Activated CD4-positive, alpha-beta T cell treated with anti-CD3 and anti-CD28 coated beads, Interleukin-2, amount 10 ng/mL, durations not matched to agents 24 days and 14 days (primary cell): ENCODE measurements at regions of chr5 and their contacts with region 1.

Region 1: DNA sequence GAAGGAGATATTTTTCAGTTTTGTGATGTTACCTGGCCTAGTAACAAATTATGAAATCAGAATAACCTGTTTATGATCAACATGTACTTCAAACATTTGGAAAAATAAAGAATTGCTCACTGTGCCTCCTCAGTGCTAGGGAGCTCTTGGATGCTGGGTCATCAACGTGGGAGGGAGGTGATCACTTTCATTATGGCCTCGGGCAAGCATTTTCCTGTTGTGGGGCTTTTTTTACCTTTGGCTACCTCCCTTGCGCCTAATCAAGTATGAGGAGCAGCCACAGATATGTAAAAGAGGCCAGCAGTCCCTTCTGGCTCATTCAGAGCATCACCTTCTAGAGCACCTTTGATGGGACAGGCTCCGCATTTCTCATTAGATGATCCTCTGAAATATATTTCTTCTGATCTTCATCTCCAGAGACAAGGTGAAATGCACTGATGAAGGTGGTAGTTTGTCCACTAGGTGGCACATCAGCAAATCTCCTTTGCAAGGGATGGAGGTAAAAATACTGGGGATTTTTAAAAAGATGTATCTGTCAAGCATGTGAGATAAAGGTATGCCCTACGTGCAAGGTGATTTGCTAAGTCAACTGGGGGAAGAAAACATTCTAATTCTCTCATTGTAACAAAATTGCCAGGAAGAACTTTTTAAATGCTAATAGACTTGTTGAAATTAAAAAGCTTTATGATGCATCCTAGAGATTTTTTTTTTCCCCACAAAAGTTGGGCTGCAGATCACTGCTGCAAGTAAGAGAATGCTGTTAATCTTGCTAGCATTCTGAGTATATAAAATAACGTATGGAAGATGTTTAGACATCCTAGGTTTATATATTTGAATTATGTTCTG is 218.2 kb downstream of the MAST4 start:
- DNase-seq: peak; percentile 88
- H3K4me3 Mint-ChIP-seq: no peak overlapping the region
- H3K27ac Mint-ChIP-seq: no peak overlapping the region
- H3K4me1 Mint-ChIP-seq: peaks cover 33% of the 10 kb centered on the region
- H3K27me3 Mint-ChIP-seq: peaks cover 3% of the 10 kb centered on the region

Region 2: DNA sequence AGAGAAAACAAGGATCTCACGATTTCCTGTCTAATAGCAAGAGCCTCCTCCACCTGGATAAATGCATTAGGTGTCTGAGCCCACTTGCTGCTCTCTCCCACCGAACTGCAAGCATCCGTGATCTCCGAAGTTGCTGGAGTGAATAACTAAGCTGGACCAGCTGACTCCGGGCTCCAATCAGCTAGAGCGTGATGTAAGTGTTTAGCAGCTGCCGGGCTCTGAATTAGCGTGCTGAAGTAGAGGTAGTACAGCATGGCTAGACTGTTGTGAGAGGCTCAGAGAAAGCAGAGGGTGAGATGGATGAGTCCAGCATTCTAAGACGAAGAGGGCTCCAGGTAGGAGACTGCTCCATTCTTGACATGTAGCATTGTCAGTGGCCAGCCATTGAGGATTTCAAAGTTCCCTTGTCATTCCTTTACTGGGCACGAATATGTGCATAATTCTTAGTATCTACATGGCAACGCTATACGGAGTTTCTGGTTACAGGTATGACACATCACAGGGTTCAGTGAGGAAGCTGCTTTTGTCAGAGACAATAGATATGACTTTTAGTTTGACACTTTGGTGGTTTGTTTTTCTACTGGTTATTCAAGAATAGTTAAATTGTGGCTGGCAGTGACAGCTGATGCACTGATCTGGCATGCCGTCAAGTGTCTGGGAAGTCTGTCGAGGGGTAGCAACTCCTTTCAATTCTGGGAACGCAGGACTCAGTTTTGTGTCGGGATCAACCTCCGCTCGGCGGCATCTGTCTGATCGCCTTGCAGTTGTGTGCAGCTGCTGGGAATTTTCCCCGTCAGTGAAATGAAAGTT is 14.4 kb after region 1 on chr5:
- intact Hi-C with region 1: loop called (anchors 2 kb)
- DNase-seq: peak; percentile 92
- H3K4me3 Mint-ChIP-seq: peak overlapping the region; percentile 93
- H3K27ac Mint-ChIP-seq: peak overlapping the region; percentile 93
- H3K4me1 Mint-ChIP-seq: peaks cover 56% of the 10 kb centered on the region
- H3K27me3 Mint-ChIP-seq: no peaks in the 10 kb centered on the region

Region 3: DNA sequence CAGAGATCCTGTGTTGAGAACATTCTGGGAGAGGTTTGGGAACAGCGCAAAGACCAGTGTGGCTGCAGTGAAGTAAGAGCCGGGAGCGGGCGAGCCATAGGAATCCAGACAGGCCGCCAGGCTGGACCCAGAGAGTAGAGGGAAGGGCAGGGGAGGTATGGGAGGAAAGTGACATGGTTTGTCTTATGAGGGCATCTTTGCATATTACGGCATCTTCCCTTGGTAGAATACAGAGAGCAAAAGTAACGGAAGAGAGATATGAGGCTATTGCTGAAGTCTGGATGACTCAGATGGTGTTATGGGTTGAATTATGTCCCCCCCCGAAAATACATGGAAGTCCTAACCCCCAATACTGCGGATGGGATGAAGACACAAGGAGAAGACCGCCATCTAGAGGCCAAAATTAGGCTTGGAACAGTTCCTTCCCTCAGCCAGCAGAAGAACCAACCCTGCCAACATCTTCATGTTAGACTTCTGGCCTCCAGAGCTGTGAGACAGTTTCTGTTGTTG is 50.0 kb after region 1 on chr5:
- intact Hi-C with region 1: loop called (anchors 1 kb)
- DNase-seq: peak; percentile 79
- H3K4me3 Mint-ChIP-seq: no peak overlapping the region
- H3K27ac Mint-ChIP-seq: peak overlapping the region; percentile 3
- H3K4me1 Mint-ChIP-seq: peaks cover 29% of the 10 kb centered on the region
- H3K27me3 Mint-ChIP-seq: peaks cover 6% of the 10 kb centered on the region